ENCODE measurements at regions of chr2 and their contacts with region 1.

Region 1: GRCh38 chr2:177604271-177605065 is 211.9 kb downstream of the AGPS start:
- DNase-seq: peak in 1 of 10 donors; percentile 14
- H3K4me3 ChIP-seq: peak overlapping the region in 4 of 59 donors; percentile 9 to 28 (median 20)
- H3K27ac ChIP-seq: peak overlapping the region in 3 of 59 donors; percentile 13 to 38 (median 33)
- H3K27me3 ChIP-seq: no peaks in the 10 kb centered on the region
- CTCF ChIP-seq: peak; percentile 36 to 85 (median 72)

Region 2: GRCh38 chr2:177445200-177445599 is 159.3 kb before region 1 on chr2:
- intact Hi-C with region 1: no loop called
- DNase-seq: no peak
- H3K4me3 ChIP-seq: no peak overlapping the region
- H3K27ac ChIP-seq: no peak overlapping the region
- H3K27me3 ChIP-seq: no peaks in the 10 kb centered on the region
- CTCF ChIP-seq: no peak

Region 3: GRCh38 chr2:177489719-177490301 is 114.7 kb before region 1 on chr2:
- intact Hi-C with region 1: loop called (anchors 2 to 10 kb)
- DNase-seq: no peak
- H3K4me3 ChIP-seq: no peak overlapping the region
- H3K27ac ChIP-seq: no peak overlapping the region
- H3K27me3 ChIP-seq: no peaks in the 10 kb centered on the region
- CTCF ChIP-seq: peak; percentile 40 to 80 (median 62)

Region 4: GRCh38 chr2:177666408-177666807 is 61.9 kb after region 1 on chr2:
- intact Hi-C with region 1: no loop called
- DNase-seq: no peak
- H3K4me3 ChIP-seq: no peak overlapping the region
- H3K27ac ChIP-seq: no peak overlapping the region
- H3K27me3 ChIP-seq: no peaks in the 10 kb centered on the region
- CTCF ChIP-seq: no peak

Region 5: DNA sequence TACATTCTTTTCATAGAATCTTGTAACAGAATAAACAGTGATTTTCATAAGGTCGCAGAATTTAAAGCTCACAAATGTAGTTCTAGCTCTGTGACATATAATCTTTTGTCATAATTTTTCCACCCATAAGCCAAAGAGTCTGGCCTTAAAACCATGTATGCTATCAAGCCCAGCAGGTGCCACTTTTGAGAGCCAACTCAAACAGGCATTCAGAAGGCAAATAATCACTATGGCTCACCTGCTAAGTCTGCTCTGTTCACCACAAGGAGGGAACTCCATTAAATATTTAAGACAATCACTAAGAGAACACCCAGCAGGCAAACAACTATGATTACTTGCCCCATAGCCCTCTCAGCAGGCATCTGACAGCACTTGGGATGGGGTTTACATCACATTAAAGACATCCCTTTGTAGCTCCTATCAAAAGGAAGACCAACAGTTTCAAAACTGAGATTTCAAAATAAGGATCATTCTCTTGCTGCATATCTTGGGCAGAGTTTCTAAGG is 226.5 kb after region 1 on chr2:
- intact Hi-C with region 1: no loop called
- DNase-seq: no peak
- H3K4me3 ChIP-seq: no peak overlapping the region
- H3K27ac ChIP-seq: no peak overlapping the region
- H3K27me3 ChIP-seq: no peaks in the 10 kb centered on the region
- CTCF ChIP-seq: no peak